BJ (cell line): ENCODE measurements at regions of chr2 and their contacts with region 1.

Region 1: GRCh38 chr2:189580658-189581353 is at the start of gene SLC40A1:
- DNase-seq: no peak
- H3K4me3 ChIP-seq: peak within 1 kb of the TSS; percentile 48
- H3K27me3 ChIP-seq: peaks cover 17% of the 10 kb centered on the region
- CTCF ChIP-seq: no peak
- polyA plus RNA-seq, gene SLC40A1: 0.47 and 0.83 TPM in 2 replicates

Region 2: GRCh38 chr2:189569295-189569910 is 11.4 kb before region 1 on chr2:
- CTCF ChIA-PET with region 1: interaction called, 10 read pairs
- POLR2A ChIA-PET with region 1: interaction called, 4 read pairs
- DNase-seq: no peak
- H3K4me3 ChIP-seq: no peak overlapping the region
- H3K27me3 ChIP-seq: peaks cover 2% of the 10 kb centered on the region; the same call in 1 of the 2 replicates
- CTCF ChIP-seq: 0 out of 2 replicates have a peak, but pooled peaks have one; percentile 13